Activated T-helper 1 cell treated with anti-CD3 and anti-CD28 coated beads, Interleukin-12 subunit alpha, Interleukin-12 subunit beta, Interleukin-2, Interleukin-4 antibody, amounts not matched to agents 30 ng/mL and 10 ng/mL and 1 ng/mL, durations not matched to agents 14 hours and 24 hours and 36 hours (primary cell): ENCODE measurements at regions of chr12 and their contacts with region 1.

Region 1: GRCh38 chr12:49264738-49265515 is at the start of gene TUBA1C:
- DNase-seq: peak; percentile 92
- H3K4me3 Mint-ChIP-seq: peak within 1 kb of the TSS; percentile 99
- H3K27ac Mint-ChIP-seq: peak within 1 kb of the TSS; percentile 100
- H3K4me1 Mint-ChIP-seq: peaks cover 38% of the 10 kb centered on the region
- H3K27me3 Mint-ChIP-seq: no peaks in the 10 kb centered on the region
- total RNA-seq, gene TUBA1C: 261 and 270 TPM in 2 replicates

Region 2: GRCh38 chr12:49069507-49070346 is 195.2 kb before region 1 on chr12 and contains the start of gene RHEBL1:
- intact Hi-C with region 1: loop called (anchors 1 kb)
- DNase-seq: peak; percentile 100
- H3K4me3 Mint-ChIP-seq: peak within 1 kb of the TSS; percentile 100
- H3K27ac Mint-ChIP-seq: peak within 1 kb of the TSS; percentile 97
- H3K4me1 Mint-ChIP-seq: peaks cover 26% of the 10 kb centered on the region
- H3K27me3 Mint-ChIP-seq: no peaks in the 10 kb centered on the region
- total RNA-seq, gene RHEBL1: 8.6 and 10.7 TPM in 2 replicates